Naive thymus-derived CD8-positive, alpha-beta T cell (primary cell): ENCODE measurements at regions of chr10 and their contacts with region 1.

Region 1: DNA sequence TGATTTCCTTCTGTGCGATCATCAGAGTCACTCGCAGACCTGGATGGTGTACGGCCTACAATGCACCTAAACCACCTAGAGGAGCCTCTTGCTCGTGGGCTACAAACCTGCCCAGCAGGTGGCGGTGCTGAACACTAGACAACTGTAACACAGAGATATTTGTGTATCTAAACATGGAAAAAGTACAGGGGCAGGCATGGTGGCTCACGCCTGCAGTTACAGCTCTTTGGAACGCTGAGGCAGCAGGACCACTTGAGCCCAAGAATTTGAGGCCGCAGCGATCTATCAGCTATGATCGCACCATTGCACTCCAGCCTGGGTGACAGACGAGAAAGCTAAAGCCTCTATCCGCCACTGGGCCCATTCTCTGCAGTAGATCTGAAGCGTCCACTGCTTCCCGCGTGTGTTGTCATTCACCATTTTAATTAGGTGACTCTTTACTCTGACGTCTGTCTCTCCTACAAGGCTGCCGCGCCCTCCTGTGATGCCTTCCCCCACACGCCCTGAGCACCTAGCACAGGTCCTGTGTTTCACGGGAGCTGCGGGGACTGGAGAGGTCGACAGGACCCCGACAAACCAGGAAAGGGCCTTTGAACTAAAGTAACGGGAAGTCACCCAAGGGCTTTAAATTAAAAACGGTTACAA is 774 bp downstream of the TUBGCP2 start:
- DNase-seq: peak; percentile 78 to 95 (median 87)
- ATAC-seq: peak; percentile 62 to 70
- H3K4me3 Mint-ChIP-seq: peak overlapping the region; percentile 94 to 99 (median 98)
- H3K27ac Mint-ChIP-seq: peak overlapping the region; percentile 94 to 100 (median 100)
- H3K4me1 Mint-ChIP-seq: peaks cover 15 to 48% (median 41%) of the 10 kb centered on the region in 4 donors
- H3K27me3 Mint-ChIP-seq: peaks cover 0 to 5% (median 0%) of the 10 kb centered on the region in 5 donors

Region 2: DNA sequence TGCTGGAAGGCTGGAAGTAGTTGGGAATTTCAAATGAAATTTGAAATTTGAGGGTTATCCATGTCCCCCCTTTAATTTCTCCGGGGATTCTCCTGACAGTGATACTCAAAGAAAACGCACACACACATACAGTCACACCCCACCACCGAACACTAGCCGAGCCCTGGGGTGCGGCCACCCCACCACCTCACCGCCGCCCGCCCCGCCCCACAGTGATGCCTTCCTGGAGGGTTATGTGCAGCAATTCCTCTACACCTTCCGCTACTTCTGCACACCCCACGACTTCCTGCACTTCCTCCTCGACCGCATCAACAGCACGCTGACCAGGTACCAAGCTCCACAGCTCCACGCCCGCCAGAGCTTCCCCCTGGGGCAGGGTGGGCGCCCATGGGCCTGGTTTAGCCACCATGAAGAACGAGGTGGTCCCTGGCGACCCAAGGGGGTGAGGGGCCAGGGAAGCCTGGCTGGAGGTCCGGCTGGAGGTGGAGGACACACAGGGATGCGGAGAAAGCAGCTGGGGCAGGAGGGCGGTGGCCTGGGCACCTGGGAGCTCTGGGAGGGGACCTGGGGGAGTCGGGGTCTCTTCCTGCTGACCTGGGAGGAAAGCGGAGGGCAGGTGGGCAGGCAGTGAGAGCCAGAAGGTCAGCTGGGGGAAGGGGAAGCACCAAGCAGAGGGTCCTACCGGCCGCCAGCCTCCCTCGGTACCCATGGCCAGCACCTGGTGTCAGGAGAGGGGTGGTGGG is 97.3 kb before region 1 on chr10:
- POLR2A ChIA-PET with region 1: interaction called, 10 read pairs
- DNase-seq: peak in 1 of 10 donors; percentile 1
- ATAC-seq: peak in 1 of 2 donors; percentile 18
- H3K4me3 Mint-ChIP-seq: no peak overlapping the region
- H3K27ac Mint-ChIP-seq: peak overlapping the region in 1 of 10 donors; percentile 77
- H3K4me1 Mint-ChIP-seq: peaks cover 0 to 4% (median under 1%) of the 10 kb centered on the region in 4 donors
- H3K27me3 Mint-ChIP-seq: peaks cover 0 to 14% (median 5%) of the 10 kb centered on the region in 5 donors

Region 3: GRCh38 chr10:133292919-133293809 is 14.7 kb before region 1 on chr10:
- POLR2A ChIA-PET with region 1: no interaction called
- DNase-seq: no peak
- ATAC-seq: no peak
- H3K4me3 Mint-ChIP-seq: no peak overlapping the region
- H3K27ac Mint-ChIP-seq: no peak overlapping the region
- H3K4me1 Mint-ChIP-seq: peaks cover 0 to 3% (median 1%) of the 10 kb centered on the region in 4 donors
- H3K27me3 Mint-ChIP-seq: no peaks in the 10 kb centered on the region